ENCODE measurements at regions of chr5 and their contacts with region 1.

Region 1: DNA sequence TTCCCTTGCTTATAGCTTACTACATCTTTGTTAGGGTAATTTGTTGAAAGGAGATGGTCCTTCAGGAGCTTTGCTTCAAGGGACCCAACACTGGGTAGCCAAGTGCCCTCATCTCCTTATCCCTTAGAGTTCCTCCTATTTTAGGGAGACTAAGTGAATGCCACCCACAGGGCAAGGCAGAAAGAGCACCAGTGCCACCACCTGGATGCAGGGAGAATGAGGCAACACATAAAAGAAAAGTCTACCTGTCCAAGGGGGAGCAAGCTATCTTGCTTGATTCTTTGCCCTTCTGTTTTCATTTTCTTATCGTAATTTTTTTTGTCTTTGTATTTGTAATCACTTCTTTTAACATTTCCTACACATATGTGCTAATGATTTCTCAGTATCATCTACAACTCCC is 205.5 kb downstream of the NPR3 start:
- DNase-seq: peak; percentile 41
- H3K4me3 ChIP-seq: no peak overlapping the region
- H3K27ac ChIP-seq: no peak overlapping the region
- H3K4me1 ChIP-seq: no peaks in the 10 kb centered on the region
- H3K27me3 ChIP-seq: no peaks in the 10 kb centered on the region
- CTCF ChIP-seq: peak; percentile 51 to 88

Region 2: GRCh38 chr5:32254881-32255539 is 661.6 kb before region 1 on chr5:
- CTCF ChIA-PET with region 1: no interaction called
- dilution Hi-C with region 1: no loop called
- in situ Hi-C with region 1: no loop called
- intact Hi-C with region 1: no loop called
- DNase-seq: no peak
- H3K4me3 ChIP-seq: no peak overlapping the region
- H3K27ac ChIP-seq: no peak overlapping the region
- H3K4me1 ChIP-seq: no peaks in the 10 kb centered on the region
- H3K27me3 ChIP-seq: no peaks in the 10 kb centered on the region
- CTCF ChIP-seq: no peak

Region 3: GRCh38 chr5:32613050-32613672 is 303.5 kb before region 1 on chr5:
- CTCF ChIA-PET with region 1: no interaction called
- dilution Hi-C with region 1: no loop called
- in situ Hi-C with region 1: no loop called
- intact Hi-C with region 1: loop called (anchors 2 kb)
- DNase-seq: peak; percentile 51
- H3K4me3 ChIP-seq: no peak overlapping the region
- H3K27ac ChIP-seq: no peak overlapping the region
- H3K4me1 ChIP-seq: no peaks in the 10 kb centered on the region
- H3K27me3 ChIP-seq: no peaks in the 10 kb centered on the region
- CTCF ChIP-seq: peak; percentile 86 to 88

Region 4: GRCh38 chr5:32690153-32690552 is 226.5 kb before region 1 on chr5:
- CTCF ChIA-PET with region 1: no interaction called
- dilution Hi-C with region 1: no loop called
- in situ Hi-C with region 1: loop called in 1 of 2 experiments (anchors 10 kb)
- intact Hi-C with region 1: no loop called
- DNase-seq: no peak
- H3K4me3 ChIP-seq: no peak overlapping the region
- H3K27ac ChIP-seq: no peak overlapping the region
- H3K4me1 ChIP-seq: no peaks in the 10 kb centered on the region
- H3K27me3 ChIP-seq: no peaks in the 10 kb centered on the region
- CTCF ChIP-seq: peak; percentile 7 to 36

Region 5: GRCh38 chr5:33180900-33181299 is 264.3 kb after region 1 on chr5:
- CTCF ChIA-PET with region 1: no interaction called
- dilution Hi-C with region 1: no loop called
- in situ Hi-C with region 1: no loop called
- intact Hi-C with region 1: loop called (anchors 1 kb)
- DNase-seq: peak; percentile 24
- H3K4me3 ChIP-seq: no peak overlapping the region
- H3K27ac ChIP-seq: no peak overlapping the region
- H3K4me1 ChIP-seq: no peaks in the 10 kb centered on the region
- H3K27me3 ChIP-seq: no peaks in the 10 kb centered on the region
- CTCF ChIP-seq: peak in 1 of 2 donors; percentile 55

Region 6: DNA sequence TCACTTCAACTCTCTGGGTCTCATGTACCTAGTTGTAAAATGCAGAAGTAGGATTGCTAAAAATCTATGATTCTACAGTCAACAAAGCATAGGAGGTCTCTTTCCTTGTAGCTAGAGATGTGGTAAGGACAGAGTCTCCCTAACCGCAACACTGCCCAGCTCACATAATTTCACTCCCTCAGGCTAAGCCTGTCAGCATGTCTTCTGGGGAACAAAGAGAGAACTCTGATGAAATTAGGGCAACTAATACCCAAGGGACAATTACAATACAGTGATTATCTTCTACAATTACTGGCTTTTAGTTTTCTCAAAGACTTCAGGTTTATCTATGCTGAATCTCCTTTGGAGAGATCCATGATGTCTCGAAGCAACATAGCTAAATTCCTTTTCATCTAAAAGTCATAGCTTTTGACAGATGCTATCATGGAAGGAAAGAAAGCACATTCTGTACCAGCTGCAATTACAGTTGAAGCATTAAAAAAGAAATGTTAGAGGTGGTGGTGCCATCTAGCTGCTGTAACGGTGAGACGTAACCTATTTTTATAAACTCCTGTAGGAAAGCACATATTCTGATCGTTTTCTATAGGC is 383.1 kb after region 1 on chr5:
- CTCF ChIA-PET with region 1: no interaction called
- dilution Hi-C with region 1: no loop called
- in situ Hi-C with region 1: no loop called
- intact Hi-C with region 1: loop called (anchors 1 kb)
- DNase-seq: peak; percentile 90
- H3K4me3 ChIP-seq: peak overlapping the region in 1 of 3 experiments; percentile 3
- H3K27ac ChIP-seq: peak overlapping the region; percentile 79
- H3K4me1 ChIP-seq: peaks cover 21% of the 10 kb centered on the region
- H3K27me3 ChIP-seq: no peaks in the 10 kb centered on the region
- CTCF ChIP-seq: peak; percentile 43 to 56

Measured in mammary epithelial cell (primary cell).